Caco-2 (cell line): ENCODE measurements at regions of chr7 and their contacts with region 1.

Region 1: GRCh38 chr7:25216837-25217236 is 11.4 kb downstream of the NPVF start:
- DNase-seq: peak in 1 of 2 experiments; percentile 44
- H3K4me3 ChIP-seq: no peak overlapping the region
- H3K4me3 Mint-ChIP-seq: no peak overlapping the region
- H3K27ac Mint-ChIP-seq: no peak overlapping the region
- H3K4me1 ChIP-seq: no peaks in the 10 kb centered on the region
- H3K4me1 Mint-ChIP-seq: no peaks in the 10 kb centered on the region
- H3K27me3 ChIP-seq: no peaks in the 10 kb centered on the region
- H3K27me3 Mint-ChIP-seq: peaks cover 12% of the 10 kb centered on the region
- CTCF ChIP-seq: peak; percentile 68 to 72

Region 2: DNA sequence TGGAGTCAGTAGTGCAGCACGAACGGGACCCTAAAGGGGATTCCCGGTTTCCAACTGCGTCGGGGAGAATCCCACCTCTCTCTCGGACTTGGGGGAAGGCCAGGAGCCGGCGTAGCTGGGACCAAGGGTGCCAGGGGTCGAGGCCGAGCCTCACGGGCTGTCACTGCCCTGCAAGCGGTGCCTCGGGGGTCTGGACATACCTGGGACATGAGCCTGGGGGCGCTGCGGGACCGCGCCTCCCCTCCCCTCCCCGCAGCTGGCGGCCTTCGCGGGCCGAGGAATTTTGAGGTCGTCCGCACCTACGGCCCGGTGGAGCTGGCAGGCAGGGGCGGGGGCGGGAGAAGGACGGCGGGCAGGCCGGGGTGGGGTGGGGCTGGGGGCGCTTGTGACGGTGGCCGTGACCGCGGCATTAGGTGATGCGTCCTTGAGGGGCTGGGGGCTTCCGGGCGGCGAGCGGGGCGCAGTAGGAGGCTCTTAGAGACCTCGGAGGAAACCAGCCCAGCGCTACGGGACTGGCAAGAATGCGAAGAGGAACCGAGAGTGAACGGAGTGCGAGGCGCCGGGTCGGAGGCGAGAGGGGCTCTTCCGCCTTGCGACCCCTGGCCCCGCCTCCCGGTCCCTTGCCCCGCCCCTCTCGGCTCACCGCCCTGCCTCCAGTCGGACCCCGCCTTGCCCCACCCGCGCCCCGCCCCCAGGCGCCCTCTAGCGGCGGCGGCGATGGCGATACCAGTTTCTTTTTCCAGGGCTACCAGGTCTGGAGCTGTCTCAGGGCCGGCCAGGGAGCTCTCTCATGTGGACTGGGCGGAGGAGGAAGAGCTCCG is 36.9 kb before region 1 on chr7:
- CTCF ChIA-PET with region 1: interaction called, 25 read pairs
- POLR2A ChIA-PET with region 1: interaction called, 4 read pairs
- intact Hi-C with region 1: loop called (anchors 1 kb)
- DNase-seq: peak; percentile 94 to 99
- H3K4me3 ChIP-seq: peak overlapping the region; percentile 67
- H3K4me3 Mint-ChIP-seq: peak overlapping the region; percentile 81
- H3K27ac Mint-ChIP-seq: peak overlapping the region; percentile 86
- H3K4me1 ChIP-seq: peaks cover 11% of the 10 kb centered on the region; the same call in 1 of the 2 replicates
- H3K4me1 Mint-ChIP-seq: no peaks in the 10 kb centered on the region
- H3K27me3 ChIP-seq: no peaks in the 10 kb centered on the region
- H3K27me3 Mint-ChIP-seq: no peaks in the 10 kb centered on the region
- CTCF ChIP-seq: peak; percentile 88 to 89

Region 3: DNA sequence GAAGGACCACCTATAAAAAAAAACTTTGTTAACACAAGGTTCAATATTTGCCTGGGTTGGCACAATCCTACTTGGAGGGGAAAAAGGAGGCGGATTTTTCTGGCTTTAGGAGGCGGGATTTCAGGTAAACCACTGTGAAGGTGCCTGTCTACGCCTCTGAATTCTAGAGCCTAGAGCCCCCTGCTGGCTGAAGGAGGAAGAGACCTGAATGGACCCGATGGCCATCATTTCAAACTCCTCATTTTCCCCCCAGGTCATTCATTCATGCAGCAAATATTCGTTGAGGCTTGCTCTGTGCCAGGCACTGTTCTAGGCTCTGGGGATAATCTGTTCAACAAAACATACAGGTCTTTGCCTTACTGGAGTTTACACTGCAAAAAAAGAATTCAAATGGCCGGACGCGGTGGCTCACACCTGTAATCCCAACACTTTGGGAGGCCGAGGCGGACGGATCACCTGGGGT is 844.9 kb after region 1 on chr7:
- CTCF ChIA-PET with region 1: no interaction called
- POLR2A ChIA-PET with region 1: no interaction called
- intact Hi-C with region 1: no loop called
- DNase-seq: peak; percentile 82 to 87
- H3K4me3 ChIP-seq: no peak overlapping the region
- H3K4me3 Mint-ChIP-seq: no peak overlapping the region
- H3K27ac Mint-ChIP-seq: no peak overlapping the region
- H3K4me1 ChIP-seq: 0 out of 2 replicates have a peak, but pooled peaks cover 7% of the 10 kb centered on the region
- H3K4me1 Mint-ChIP-seq: peaks cover 7% of the 10 kb centered on the region
- H3K27me3 ChIP-seq: no peaks in the 10 kb centered on the region
- H3K27me3 Mint-ChIP-seq: no peaks in the 10 kb centered on the region
- CTCF ChIP-seq: peak; percentile 88 to 91